Right ventricle myocardium inferior (tissue), 1 donor: ENCODE measurements at regions of chr6 and their contacts with region 1.

Region 1: DNA sequence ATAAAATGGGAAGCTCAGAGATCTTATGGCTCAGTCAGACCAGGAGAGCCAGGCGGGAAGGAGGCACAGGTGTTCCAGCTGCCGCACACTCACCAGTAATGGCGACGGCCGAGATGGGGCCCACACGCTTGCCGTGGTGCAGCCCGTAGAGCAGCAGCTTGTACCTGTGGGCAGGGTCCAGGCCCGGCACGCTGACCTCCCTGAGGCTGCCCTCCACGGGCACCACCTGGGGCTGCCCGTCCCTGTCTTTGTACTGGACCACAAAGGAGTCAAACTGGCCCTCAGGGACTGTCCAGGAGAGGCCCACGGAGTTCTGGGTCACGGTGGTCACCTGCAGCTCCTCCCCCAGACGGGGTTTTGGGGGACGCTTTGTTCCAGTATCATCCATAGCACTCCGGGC is 31.2 kb downstream of the CYP21A2 start:
- DNase-seq: no peak
- ATAC-seq: no peak

Region 2: DNA sequence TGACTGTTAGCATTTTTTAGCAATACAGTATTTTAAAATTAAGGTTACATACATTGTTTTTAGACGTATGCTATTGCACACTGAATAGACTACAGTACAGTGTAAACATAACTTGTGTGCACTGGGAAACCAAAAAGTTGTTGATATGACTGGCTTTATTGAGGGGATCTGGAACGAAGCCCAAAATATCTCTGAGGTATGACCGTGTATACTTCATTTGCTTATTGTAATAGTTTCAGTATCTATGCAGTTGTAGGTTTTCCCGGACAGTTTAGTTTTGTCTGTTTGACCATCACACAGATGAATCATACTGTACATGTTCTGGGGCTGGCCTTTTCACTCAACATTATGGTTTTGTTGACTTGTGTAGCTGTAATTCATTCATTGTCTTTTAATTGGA is 160.7 kb before region 1 on chr6:
- intact Hi-C with region 1: loop called (anchors 5 kb)
- DNase-seq: no peak
- ATAC-seq: no peak

Region 3: GRCh38 chr6:32046450-32047083 is 22.9 kb before region 1 on chr6:
- intact Hi-C with region 1: no loop called
- DNase-seq: peak; percentile 75
- ATAC-seq: peak; percentile 37